AG04449 (cell line): ENCODE measurements at regions of chr9 and their contacts with region 1.

Region 1: GRCh38 chr9:129139993-129140396 is 28.8 kb downstream of the PTPA start:
- DNase-seq: peak; percentile 99
- H3K4me3 ChIP-seq: peak overlapping the region; percentile 50
- CTCF ChIP-seq: no peak

Region 2: GRCh38 chr9:129160712-129161533 is 20.9 kb after region 1 on chr9:
- CTCF ChIA-PET with region 1: interaction called, 345 read pairs
- POLR2A ChIA-PET with region 1: interaction called, 7 read pairs
- DNase-seq: no peak
- H3K4me3 ChIP-seq: no peak overlapping the region
- CTCF ChIP-seq: no peak

Region 3: GRCh38 chr9:129460323-129461261 is 320.6 kb after region 1 on chr9:
- CTCF ChIA-PET with region 1: interaction called, 31 read pairs
- POLR2A ChIA-PET with region 1: interaction called, 5 read pairs
- DNase-seq: peak; percentile 92
- H3K4me3 ChIP-seq: peak overlapping the region; percentile 53
- CTCF ChIP-seq: peak; percentile 24

Region 4: GRCh38 chr9:129495534-129496325 is 355.7 kb after region 1 on chr9:
- CTCF ChIA-PET with region 1: interaction called, 26 read pairs
- POLR2A ChIA-PET with region 1: interaction called, 33 read pairs
- DNase-seq: no peak
- H3K4me3 ChIP-seq: peak overlapping the region; percentile 78
- CTCF ChIP-seq: no peak

Region 5: DNA sequence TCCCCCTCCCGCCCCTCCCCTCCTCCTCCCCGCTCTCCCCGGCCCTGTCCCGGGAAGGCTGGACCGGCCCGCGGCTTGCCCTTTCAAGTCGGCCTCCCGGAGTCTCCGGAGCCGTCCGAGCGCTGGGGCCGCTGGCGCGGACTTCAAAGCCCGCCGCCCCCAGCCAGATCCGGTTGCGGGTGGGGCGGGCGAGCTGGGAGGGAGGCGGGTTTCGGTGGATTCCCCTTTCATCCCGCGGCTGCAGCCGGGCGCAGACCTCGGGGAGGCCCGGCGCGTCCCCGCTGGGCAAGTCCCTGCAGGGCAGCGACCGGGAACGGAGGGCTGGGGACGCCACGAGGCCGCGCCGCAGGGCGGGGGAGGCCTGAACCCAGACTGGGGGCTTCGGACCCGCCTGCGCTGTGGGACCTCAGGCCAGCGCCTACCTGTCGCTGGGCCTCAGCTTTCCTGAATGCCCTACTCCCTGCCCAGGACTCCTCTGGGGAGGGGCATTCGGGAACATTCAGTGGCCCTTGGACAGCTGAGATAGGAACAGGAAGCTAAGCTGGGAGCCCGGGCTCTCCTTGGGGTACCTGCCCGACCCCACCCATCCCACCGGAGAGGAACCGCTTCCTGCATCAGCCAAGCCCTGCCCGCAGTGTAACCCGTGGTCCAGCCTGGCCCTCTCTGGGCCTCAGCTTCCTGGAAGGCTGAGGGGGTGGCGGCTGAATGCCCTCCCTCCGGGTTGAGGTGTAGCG is 457.5 kb after region 1 on chr9:
- CTCF ChIA-PET with region 1: interaction called, 15 read pairs
- POLR2A ChIA-PET with region 1: interaction called, 5 read pairs
- DNase-seq: no peak
- H3K4me3 ChIP-seq: peak overlapping the region; percentile 45
- CTCF ChIP-seq: no peak

Region 6: GRCh38 chr9:129626079-129626624 is 486.2 kb after region 1 on chr9 and contains the start of gene NTMT1:
- CTCF ChIA-PET with region 1: interaction called, 735 read pairs
- POLR2A ChIA-PET with region 1: interaction called, 15 read pairs
- DNase-seq: no peak
- H3K4me3 ChIP-seq: peak within 1 kb of the TSS; percentile 66
- CTCF ChIP-seq: no peak